ENCODE measurements at regions of chr2 and their contacts with region 1.

Region 1: GRCh38 chr2:85302121-85302520 is 25.7 kb downstream of the TGOLN2 start:
- DNase-seq: no peak
- ATAC-seq: no peak
- H3K4me3 Mint-ChIP-seq: no peak overlapping the region
- H3K27ac Mint-ChIP-seq: no peak overlapping the region
- H3K4me1 Mint-ChIP-seq: peaks cover 4% of the 10 kb centered on the region
- H3K27me3 Mint-ChIP-seq: peaks cover 23% of the 10 kb centered on the region
- CTCF ChIP-seq: no peak

Region 2: GRCh38 chr2:85066874-85067351 is 235.2 kb before region 1 on chr2:
- CTCF ChIA-PET with region 1: interaction called, 5 read pairs
- POLR2A ChIA-PET with region 1: no interaction called
- intact Hi-C with region 1: loop called (anchors 1 kb)
- DNase-seq: no peak
- ATAC-seq: peak; percentile 31
- H3K4me3 Mint-ChIP-seq: no peak overlapping the region
- H3K27ac Mint-ChIP-seq: no peak overlapping the region
- H3K4me1 Mint-ChIP-seq: peaks cover 9% of the 10 kb centered on the region
- H3K27me3 Mint-ChIP-seq: peaks cover 19% of the 10 kb centered on the region
- CTCF ChIP-seq: no peak

Region 3: DNA sequence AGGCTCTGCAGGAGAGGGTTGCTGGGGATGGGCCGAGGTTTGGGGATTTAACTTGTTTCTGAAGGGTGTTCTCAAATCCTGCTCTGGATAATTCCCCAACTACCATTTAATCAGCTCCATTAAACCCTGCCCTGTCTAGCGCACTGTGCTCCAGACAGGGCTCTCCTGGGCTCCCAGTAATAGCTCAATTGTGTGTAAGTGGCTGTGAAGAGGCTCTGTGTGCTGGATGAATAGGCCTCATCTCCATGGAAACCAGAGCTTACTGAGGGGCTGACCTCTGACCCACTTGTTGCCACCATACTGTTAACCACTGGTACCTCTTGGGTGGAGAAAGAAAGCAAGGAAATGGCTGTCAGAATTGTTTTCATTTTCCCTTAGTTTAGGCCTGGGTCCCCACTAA is 67.3 kb before region 1 on chr2:
- CTCF ChIA-PET with region 1: no interaction called
- POLR2A ChIA-PET with region 1: no interaction called
- intact Hi-C with region 1: no loop called
- DNase-seq: no peak
- ATAC-seq: no peak
- H3K4me3 Mint-ChIP-seq: no peak overlapping the region
- H3K27ac Mint-ChIP-seq: no peak overlapping the region
- H3K4me1 Mint-ChIP-seq: no peaks in the 10 kb centered on the region
- H3K27me3 Mint-ChIP-seq: peaks cover 34% of the 10 kb centered on the region
- CTCF ChIP-seq: no peak

Region 4: GRCh38 chr2:85266146-85267041 is 35.7 kb before region 1 on chr2:
- CTCF ChIA-PET with region 1: interaction called, 28 read pairs
- POLR2A ChIA-PET with region 1: no interaction called
- intact Hi-C with region 1: loop called (anchors 1 kb)
- DNase-seq: peak; percentile 44
- ATAC-seq: peak; percentile 25
- H3K4me3 Mint-ChIP-seq: no peak overlapping the region
- H3K27ac Mint-ChIP-seq: no peak overlapping the region
- H3K4me1 Mint-ChIP-seq: no peaks in the 10 kb centered on the region
- H3K27me3 Mint-ChIP-seq: peaks cover 16% of the 10 kb centered on the region
- CTCF ChIP-seq: peak; percentile 53